Activated B cell treated with CpG ODN at 0.5 μM for 24 hours (primary cell): ENCODE measurements at regions of chr19 and their contacts with region 1.

Region 1: GRCh38 chr19:41310033-41310758 is at the start of gene CCDC97:
- DNase-seq: peak; percentile 92
- ATAC-seq: peak; percentile 76
- H3K4me3 Mint-ChIP-seq: peak within 1 kb of the TSS; percentile 99
- H3K27ac Mint-ChIP-seq: peak within 1 kb of the TSS; percentile 100
- H3K4me1 Mint-ChIP-seq: peaks cover 65% of the 10 kb centered on the region
- H3K27me3 Mint-ChIP-seq: no peaks in the 10 kb centered on the region
- CTCF ChIP-seq: no peak
- total RNA-seq, gene CCDC97: 61.7 and 65.3 TPM in 2 replicates

Region 2: DNA sequence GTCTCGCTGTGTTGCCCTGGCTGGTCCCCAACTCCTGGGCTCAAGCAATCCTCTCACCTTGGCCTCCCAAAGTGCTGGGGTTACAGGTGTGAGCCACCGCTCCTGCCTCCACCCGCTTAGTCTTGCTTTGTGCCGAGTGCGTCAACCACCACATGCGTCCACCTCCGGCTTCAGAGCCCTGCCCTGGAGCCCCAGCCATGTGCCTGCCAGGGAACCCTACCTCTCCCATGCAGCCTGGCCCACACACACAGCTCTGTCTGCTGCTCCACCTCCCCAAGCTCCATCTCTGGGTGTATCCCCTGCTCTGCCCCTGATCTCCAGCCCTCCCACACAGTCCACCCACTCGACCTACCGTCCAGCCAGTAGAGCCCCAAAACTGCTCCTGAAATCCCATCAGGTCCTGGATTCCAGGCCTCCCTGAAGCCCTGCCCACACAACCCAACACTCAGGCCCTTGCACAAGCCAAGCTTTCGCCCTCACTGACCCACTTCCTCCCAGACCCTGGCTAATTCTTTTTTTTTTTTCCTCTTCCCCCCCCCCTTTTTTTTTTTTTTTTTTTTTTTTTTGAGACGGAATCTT is 186.4 kb before region 1 on chr19:
- CTCF ChIA-PET with region 1: interaction called, 7 read pairs
- POLR2A ChIA-PET with region 1: no interaction called
- intact Hi-C with region 1: loop called (anchors 1 kb)
- DNase-seq: no peak
- ATAC-seq: no peak
- H3K4me3 Mint-ChIP-seq: no peak overlapping the region
- H3K27ac Mint-ChIP-seq: no peak overlapping the region
- H3K4me1 Mint-ChIP-seq: peaks cover 16% of the 10 kb centered on the region
- H3K27me3 Mint-ChIP-seq: peaks cover 19% of the 10 kb centered on the region
- CTCF ChIP-seq: no peak

Region 3: DNA sequence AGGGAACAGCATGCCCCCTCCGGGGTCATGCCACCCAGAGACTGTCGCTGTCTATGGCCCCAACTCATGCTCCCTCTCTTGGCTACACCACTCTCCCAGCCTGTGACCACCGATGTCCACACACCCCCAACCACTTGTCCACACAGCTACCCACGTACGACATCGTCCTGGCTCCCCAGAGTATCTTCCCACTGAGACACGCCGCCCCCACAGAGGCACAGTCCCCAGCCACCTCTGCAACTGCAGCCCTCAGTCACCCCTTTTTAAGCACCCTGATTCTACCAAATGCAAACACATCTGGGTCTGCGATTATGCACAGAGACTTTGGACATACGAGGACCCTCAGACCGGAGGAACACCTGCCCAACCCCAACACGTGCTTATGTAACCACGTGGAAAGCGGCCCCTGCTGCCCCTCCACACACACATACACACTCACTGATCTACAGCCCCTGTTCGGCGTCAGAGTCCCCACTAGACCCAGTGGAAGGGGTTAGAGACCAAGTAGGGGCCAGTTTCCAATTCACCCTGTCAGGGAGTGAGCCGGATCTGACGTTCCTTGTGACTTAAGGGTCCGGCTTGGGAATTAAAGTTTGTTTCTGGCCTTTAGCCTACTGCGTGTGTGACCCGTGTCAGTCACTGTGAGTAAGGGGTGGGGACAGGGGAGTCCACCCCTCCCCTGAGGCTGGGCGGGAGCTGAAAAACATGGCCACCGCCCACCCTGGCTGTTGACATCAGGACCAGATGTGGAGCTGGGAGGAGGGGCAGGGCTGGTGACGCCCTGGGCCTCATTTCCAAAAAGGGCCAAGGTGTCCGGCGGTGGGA is 103.1 kb before region 1 on chr19:
- CTCF ChIA-PET with region 1: interaction called, 45 read pairs
- POLR2A ChIA-PET with region 1: interaction called, 26 read pairs
- intact Hi-C with region 1: no loop called
- DNase-seq: no peak
- ATAC-seq: no peak
- H3K4me3 Mint-ChIP-seq: no peak overlapping the region
- H3K27ac Mint-ChIP-seq: no peak overlapping the region
- H3K4me1 Mint-ChIP-seq: no peaks in the 10 kb centered on the region
- H3K27me3 Mint-ChIP-seq: peaks cover 3% of the 10 kb centered on the region
- CTCF ChIP-seq: no peak

Region 4: GRCh38 chr19:41298348-41298964 is 11.7 kb before region 1 on chr19:
- CTCF ChIA-PET with region 1: interaction called, 35 read pairs
- POLR2A ChIA-PET with region 1: interaction called, 11 read pairs
- intact Hi-C with region 1: loop called (anchors 1 kb)
- DNase-seq: no peak
- ATAC-seq: peak; percentile 15
- H3K4me3 Mint-ChIP-seq: peak overlapping the region; percentile 72
- H3K27ac Mint-ChIP-seq: peak overlapping the region; percentile 96
- H3K4me1 Mint-ChIP-seq: peaks cover 71% of the 10 kb centered on the region
- H3K27me3 Mint-ChIP-seq: no peaks in the 10 kb centered on the region
- CTCF ChIP-seq: no peak

Region 5: GRCh38 chr19:41327576-41328156 is 17.5 kb after region 1 on chr19:
- CTCF ChIA-PET with region 1: interaction called, 4 read pairs
- POLR2A ChIA-PET with region 1: interaction called, 28 read pairs
- intact Hi-C with region 1: loop called (anchors 1 kb)
- DNase-seq: peak; percentile 77
- ATAC-seq: peak; percentile 71
- H3K4me3 Mint-ChIP-seq: peak overlapping the region; percentile 77
- H3K27ac Mint-ChIP-seq: peak overlapping the region; percentile 91
- H3K4me1 Mint-ChIP-seq: peaks cover 70% of the 10 kb centered on the region
- H3K27me3 Mint-ChIP-seq: no peaks in the 10 kb centered on the region
- CTCF ChIP-seq: no peak

Region 6: GRCh38 chr19:41397086-41398049 is 87.2 kb after region 1 on chr19 and contains the starts of genes BCKDHA and EXOSC5:
- CTCF ChIA-PET with region 1: no interaction called
- POLR2A ChIA-PET with region 1: no interaction called
- intact Hi-C with region 1: loop called (anchors 1 kb)
- DNase-seq: peak; percentile 95
- ATAC-seq: peak; percentile 98
- H3K4me3 Mint-ChIP-seq: peak within 1 kb of the TSS; percentile 98
- H3K27ac Mint-ChIP-seq: peak within 1 kb of the TSS; percentile 99
- H3K4me1 Mint-ChIP-seq: peaks cover 47% of the 10 kb centered on the region
- H3K27me3 Mint-ChIP-seq: no peaks in the 10 kb centered on the region
- CTCF ChIP-seq: no peak
- total RNA-seq, gene BCKDHA: 22.2 and 25.2 TPM in 2 replicates
- total RNA-seq, gene EXOSC5: 30.1 and 31.6 TPM in 2 replicates

Region 7: DNA sequence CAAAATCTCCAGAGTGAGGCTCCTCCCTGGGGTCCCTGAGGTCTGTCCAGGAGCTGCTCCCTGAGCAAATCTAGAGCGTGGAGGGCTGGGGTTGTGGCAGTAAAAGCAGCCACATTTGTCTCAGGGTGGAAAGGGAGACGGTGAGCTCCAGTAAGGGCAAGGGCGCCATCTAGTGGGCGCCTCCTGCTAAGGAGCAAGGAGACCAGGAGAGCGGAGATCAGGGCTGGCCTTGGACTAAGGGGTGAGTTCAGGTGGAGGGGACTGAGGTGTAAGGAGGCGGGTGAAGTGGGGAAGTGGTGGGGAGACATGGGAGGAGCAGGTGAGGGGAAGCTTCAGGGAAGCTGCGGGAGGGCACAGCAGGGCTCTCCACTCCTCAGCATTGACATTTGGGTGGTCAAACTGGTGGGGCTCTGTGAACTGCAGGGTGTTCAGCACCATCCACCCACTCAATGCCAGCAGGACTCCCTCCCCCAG is 260.5 kb after region 1 on chr19:
- CTCF ChIA-PET with region 1: interaction called, 3 read pairs
- POLR2A ChIA-PET with region 1: interaction called, 5 read pairs
- intact Hi-C with region 1: loop called (anchors 5 kb)
- DNase-seq: peak; percentile 77
- ATAC-seq: peak; percentile 97
- H3K4me3 Mint-ChIP-seq: no peak overlapping the region
- H3K27ac Mint-ChIP-seq: no peak overlapping the region
- H3K4me1 Mint-ChIP-seq: peaks cover 14% of the 10 kb centered on the region
- H3K27me3 Mint-ChIP-seq: peaks cover 2% of the 10 kb centered on the region
- CTCF ChIP-seq: peak; percentile 50